Lower leg skin (tissue), 4 donors: ENCODE measurements at regions of chr18 and their contacts with region 1.

Region 1: GRCh38 chr18:79988451-79989194 is at the start of gene TXNL4A:
- DNase-seq: peak; percentile 77 to 96
- H3K4me3 ChIP-seq: peak within 1 kb of the TSS; percentile 78
- CTCF ChIP-seq: no peak
- POLR2A ChIP-seq: peak in 1 of 2 donors; percentile 71
- total RNA-seq, gene TXNL4A: 12.6 to 49.9 (median 24.0) TPM

Region 2: DNA sequence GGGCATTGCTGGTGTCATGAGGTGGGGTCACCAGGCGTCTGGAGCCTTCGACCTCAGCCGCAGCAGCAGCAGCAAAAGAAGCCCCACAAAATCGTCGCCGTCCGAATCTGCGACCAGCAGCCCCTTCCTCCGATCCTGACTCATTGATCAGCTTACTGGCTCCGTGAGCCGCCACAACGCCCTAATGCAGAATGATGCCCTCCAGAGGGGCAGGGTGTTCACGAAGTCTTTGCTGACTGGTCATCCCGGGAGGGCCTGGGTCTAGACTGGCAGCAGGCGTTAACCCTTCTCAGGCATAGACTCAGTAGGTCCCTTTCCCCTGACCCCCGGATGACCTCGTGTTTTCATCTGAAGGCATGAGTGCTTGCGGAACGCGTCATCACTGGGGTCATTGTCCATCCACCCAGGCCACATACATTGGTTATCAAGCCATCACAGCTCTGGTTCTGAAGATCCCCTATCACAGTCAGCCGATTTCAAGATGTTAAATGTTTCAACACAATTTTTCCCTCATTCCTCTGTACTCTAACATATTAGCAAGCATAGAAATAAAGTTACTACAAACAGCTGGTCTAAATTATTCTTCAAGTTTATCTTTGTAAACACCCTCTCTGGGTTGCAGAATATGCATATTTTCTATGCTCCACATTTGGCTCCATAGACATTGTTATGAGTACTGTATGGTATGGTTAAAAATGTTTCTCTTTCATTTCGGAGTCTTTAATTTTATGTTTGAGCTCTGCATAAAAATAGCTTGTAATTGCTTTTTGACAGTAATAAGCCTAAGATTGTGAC is 1092.3 kb before region 1 on chr18:
- intact Hi-C with region 1: loop called (anchors 5 kb)
- DNase-seq: peak in 1 of 2 donors; percentile 58
- H3K4me3 ChIP-seq: no peak overlapping the region
- CTCF ChIP-seq: no peak
- POLR2A ChIP-seq: no peak

Region 3: DNA sequence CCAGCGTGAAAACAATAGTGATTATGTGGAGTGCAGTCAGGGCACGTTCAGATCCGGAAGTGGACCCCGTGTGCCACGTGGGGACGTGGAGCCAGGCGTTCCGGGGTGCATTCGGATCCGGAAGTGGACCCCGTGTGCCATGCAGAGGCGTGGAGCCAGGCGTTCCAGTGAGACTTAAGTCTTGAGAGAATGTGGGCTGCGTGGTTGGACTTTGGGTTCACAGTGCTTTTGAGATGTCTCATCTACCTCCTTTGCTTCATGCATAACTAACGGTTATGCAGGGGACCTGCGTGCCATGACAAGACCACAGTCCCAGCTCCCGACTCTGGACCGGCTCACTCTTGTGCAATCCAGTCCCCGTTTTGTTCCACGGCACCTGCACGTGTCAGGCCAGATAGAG is 280.2 kb before region 1 on chr18:
- intact Hi-C with region 1: no loop called
- DNase-seq: no peak
- H3K4me3 ChIP-seq: no peak overlapping the region
- CTCF ChIP-seq: no peak
- POLR2A ChIP-seq: no peak

Region 4: GRCh38 chr18:79951578-79952455 is 36.8 kb before region 1 on chr18 and contains the start of gene SLC66A2:
- intact Hi-C with region 1: loop called (anchors 2 kb)
- DNase-seq: peak; percentile 90 to 98
- H3K4me3 ChIP-seq: peak within 1 kb of the TSS; percentile 84
- CTCF ChIP-seq: no peak
- POLR2A ChIP-seq: no peak
- total RNA-seq, gene SLC66A2: 65.6 to 112 (median 75.3) TPM